Calu3 (cell line): ENCODE measurements at regions of chr10 and their contacts with region 1.

Region 1: DNA sequence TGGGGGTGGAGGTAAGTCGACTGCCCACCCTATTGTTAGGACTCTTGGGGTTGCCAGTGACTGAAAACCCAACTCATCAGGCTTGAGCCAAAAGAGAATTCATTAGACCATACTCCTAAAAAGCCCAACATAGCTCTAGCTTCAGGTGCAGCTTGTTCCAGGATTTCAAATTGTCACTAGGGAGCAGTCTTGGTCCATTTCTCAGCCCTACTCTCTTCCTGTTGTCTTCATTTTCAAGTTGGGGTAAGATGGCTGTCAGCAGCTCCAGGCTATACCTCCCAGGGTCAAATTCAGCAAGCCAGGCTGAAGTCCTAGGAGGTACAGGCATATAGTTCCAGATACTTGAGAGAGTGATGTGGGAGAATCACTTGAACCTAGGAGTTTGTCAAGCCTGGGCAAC is 14.9 kb upstream of the COL13A1 start:
- DNase-seq: no peak
- H3K4me3 Mint-ChIP-seq: no peak overlapping the region
- H3K27ac Mint-ChIP-seq: no peak overlapping the region
- H3K4me1 Mint-ChIP-seq: no peaks in the 10 kb centered on the region
- H3K27me3 Mint-ChIP-seq: peaks cover 16% of the 10 kb centered on the region
- CTCF ChIP-seq: no peak

Region 2: DNA sequence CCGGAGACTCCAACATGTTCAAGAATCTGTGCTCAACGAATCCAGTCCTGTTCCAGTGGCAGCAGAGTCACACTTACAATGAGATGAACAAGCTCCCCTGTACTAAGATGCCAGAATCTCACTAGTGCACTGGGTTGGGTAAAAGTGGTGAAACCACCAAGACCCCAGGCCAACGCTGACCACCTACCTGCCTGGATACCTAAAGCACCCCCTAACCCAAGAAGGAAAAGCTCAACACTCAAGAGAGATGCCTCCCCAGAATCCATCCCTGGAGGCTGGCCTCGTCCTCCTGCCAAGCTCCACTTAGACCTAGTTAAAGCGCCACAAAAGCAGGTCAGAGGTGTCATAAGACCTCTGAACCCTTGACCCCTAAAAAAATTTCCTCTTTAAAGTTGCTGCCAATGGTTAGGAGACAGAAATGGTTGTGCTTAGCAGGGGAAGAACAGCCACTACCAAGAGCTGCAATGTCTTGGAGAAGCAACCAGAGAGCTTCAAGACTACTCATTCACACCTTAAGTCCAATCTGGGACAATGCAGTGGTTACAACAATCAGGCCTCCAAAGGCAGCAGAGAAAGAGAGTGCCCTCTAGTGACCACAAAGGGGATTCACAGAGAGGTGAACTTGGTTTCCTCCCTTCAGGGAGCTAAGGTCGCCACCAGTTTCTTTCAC is 171.2 kb after region 1 on chr10:
- CTCF ChIA-PET with region 1: interaction called, 18 read pairs
- intact Hi-C with region 1: loop called (anchors 2 kb)
- DNase-seq: peak; percentile 56
- H3K4me3 Mint-ChIP-seq: no peak overlapping the region
- H3K27ac Mint-ChIP-seq: no peak overlapping the region
- H3K4me1 Mint-ChIP-seq: peaks cover 6% of the 10 kb centered on the region
- H3K27me3 Mint-ChIP-seq: peaks cover 79% of the 10 kb centered on the region
- CTCF ChIP-seq: peak; percentile 86